ENCODE measurements at regions of chr6 and their contacts with region 1.

Region 1: DNA sequence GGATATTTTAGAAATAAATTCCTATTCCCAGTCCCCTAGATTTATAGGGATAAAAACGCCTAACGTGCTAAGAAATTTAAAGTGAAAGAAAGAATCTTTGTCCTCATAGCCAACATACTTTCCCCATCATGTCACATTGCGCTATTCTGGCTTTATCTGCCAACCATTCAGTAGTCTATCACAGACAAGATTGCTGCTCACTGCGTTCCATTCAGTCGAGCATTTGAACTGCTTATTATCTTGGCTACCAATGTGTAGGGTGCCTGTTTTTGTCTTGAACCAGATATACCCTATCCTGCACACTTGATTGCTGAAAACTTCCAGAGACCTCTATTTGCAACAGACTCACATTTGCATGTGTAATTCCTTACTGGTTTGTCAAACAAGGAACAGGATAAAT is 751.5 kb downstream of the EPHA7 start:
- DNase-seq: no peak

Region 2: DNA sequence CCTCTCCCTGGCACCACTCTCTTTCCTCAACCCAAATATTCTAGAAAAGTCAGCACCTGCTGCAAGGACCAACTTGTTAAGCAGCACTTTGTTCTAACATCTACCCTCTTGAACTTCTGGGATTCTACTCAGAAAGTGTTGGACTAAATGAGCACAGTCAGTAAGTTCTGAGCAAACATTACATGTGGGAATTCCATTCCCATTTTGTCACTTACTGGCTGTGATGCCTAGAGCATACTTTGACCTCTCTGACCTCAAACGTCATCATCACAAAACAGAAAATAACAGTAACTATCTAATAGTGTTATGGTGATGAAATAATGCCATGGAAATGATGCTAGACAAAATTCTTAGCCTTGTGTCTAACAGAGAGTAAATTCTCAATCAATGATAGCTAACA is 77.9 kb before region 1 on chr6:
- intact Hi-C with region 1: no loop called
- DNase-seq: no peak

Region 3: GRCh38 chr6:92756912-92757311 is 89.1 kb after region 1 on chr6:
- intact Hi-C with region 1: loop called (anchors 10 kb)
- DNase-seq: no peak

Region 4: DNA sequence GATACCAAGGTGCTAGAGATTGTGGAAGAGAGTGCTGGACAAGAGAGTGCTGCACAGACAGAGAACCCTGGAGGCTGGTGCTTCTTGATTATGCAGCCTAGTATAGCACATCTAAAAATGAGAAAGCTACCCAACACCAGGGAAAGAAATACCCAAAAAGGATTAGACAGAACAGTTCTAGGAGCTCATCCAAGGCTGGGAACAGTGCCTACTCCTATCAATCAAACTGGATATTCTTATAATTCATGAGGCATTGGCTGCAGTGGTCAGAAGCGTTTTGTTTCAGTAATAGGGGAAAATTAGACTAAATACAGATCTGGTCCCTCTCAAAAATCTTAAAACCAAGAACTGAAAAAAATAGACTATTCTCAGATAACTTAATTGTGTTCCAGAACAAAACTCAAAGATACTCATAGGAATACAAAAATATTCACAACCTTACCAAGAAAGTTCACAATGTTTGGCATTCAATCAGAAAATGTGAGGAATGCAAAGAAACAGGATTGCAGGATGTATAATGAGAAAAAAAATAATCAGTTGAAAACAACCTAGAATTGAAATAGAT is 528.6 kb after region 1 on chr6:
- intact Hi-C with region 1: no loop called
- DNase-seq: no peak